Mammary epithelial cell (primary cell): ENCODE measurements at regions of chr10 and their contacts with region 1.

Region 1: GRCh38 chr10:86399879-86400704 is 33.5 kb upstream of the GRID1 start:
- DNase-seq: peak; percentile 95
- H3K4me3 ChIP-seq: peak overlapping the region; percentile 68 to 83 (median 79)
- H3K27ac ChIP-seq: peak overlapping the region; percentile 27
- H3K4me1 ChIP-seq: peaks cover 31% of the 10 kb centered on the region
- H3K27me3 ChIP-seq: no peaks in the 10 kb centered on the region
- CTCF ChIP-seq: peak; percentile 79 to 94

Region 2: GRCh38 chr10:86440874-86441843 is 41.1 kb after region 1 on chr10:
- CTCF ChIA-PET with region 1: no interaction called
- dilution Hi-C with region 1: no loop called
- in situ Hi-C with region 1: no loop called
- intact Hi-C with region 1: loop called (anchors 5 kb)
- DNase-seq: peak; percentile 70
- H3K4me3 ChIP-seq: no peak overlapping the region
- H3K27ac ChIP-seq: no peak overlapping the region
- H3K4me1 ChIP-seq: no peaks in the 10 kb centered on the region
- H3K27me3 ChIP-seq: no peaks in the 10 kb centered on the region
- CTCF ChIP-seq: no peak

Region 3: DNA sequence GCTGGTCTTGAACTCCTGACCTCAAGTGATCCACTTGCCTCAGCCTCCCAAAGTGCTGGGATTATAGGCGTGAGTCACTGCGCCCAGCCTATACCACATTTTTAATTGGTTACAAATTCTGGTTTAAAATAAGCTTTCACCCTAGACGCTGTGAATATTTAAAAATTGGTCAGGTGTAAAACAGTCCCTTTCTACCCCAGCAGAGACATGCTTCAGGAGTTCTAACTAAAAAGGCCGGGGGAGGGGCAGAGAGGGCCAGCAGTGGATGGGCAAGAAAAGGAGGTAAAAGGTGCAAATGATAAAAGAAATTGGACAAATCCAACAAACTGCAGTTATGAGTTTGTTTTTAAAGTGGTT is 51.5 kb after region 1 on chr10:
- CTCF ChIA-PET with region 1: no interaction called
- dilution Hi-C with region 1: no loop called
- in situ Hi-C with region 1: no loop called
- intact Hi-C with region 1: no loop called
- DNase-seq: no peak
- H3K4me3 ChIP-seq: no peak overlapping the region
- H3K27ac ChIP-seq: no peak overlapping the region
- H3K4me1 ChIP-seq: no peaks in the 10 kb centered on the region
- H3K27me3 ChIP-seq: no peaks in the 10 kb centered on the region
- CTCF ChIP-seq: no peak

Region 4: DNA sequence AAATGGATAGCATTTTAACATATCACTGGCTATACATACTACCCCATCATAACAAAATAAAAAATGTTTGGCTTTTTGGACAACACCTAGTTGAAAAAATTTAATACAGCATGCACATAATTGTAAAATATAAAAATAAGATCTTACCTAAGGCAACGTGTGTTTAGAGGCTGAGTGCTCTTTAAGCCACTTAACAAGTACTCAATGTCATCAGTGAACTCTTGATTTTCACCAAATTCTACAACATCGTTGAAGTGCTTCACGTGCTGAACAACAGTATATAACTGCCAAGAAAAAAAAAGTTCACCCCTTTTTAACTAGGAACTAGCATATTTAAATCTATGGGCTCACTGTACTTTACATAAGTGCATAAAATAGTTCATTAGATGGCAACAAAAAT is 72.0 kb after region 1 on chr10:
- CTCF ChIA-PET with region 1: no interaction called
- dilution Hi-C with region 1: no loop called
- in situ Hi-C with region 1: no loop called
- intact Hi-C with region 1: no loop called
- DNase-seq: no peak
- H3K4me3 ChIP-seq: no peak overlapping the region
- H3K27ac ChIP-seq: no peak overlapping the region
- H3K4me1 ChIP-seq: no peaks in the 10 kb centered on the region
- H3K27me3 ChIP-seq: no peaks in the 10 kb centered on the region
- CTCF ChIP-seq: no peak

Region 5: DNA sequence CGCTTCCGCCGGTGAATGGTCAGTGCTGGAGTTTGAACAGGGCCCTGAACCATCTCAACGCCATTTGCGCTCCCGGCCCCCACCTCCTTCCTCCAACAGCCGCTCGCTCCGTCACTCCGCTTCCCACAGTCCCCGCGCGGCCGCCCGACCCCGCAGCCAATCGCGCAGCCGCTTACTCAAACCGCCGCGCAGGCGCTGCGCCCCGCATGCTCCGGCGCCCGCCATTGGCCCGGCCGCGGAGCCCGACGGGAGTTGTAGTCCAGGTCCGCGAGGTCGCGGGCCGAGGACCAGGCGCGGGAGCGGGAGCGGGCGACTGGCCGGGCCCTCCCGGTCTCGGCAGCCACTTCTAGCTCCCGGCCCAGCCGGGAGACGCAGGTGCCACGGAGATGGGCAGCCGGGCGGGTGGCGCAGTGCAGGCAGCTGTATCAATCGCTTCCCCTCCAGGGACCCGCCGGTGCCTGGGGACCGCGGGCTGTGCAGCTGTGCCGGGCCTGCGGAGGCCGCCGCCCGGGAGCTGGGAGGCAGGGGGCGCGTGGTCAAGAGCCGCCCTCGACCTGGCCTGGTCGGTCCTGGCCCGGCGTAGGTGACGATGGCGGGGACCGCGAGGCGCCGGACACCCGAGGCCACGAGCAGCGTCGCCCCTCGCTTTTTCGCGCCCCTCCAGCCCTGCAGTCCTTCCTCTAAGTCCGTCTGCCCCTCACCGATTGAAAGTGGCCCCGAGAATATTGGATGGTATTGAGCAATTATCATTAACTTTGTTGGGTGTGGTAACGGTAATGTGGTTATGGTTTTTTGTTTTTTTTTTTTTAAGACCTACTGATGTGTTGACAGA is 121.8 kb after region 1 on chr10 and contains the start of gene WAPL:
- CTCF ChIA-PET with region 1: no interaction called
- dilution Hi-C with region 1: no loop called
- in situ Hi-C with region 1: no loop called
- intact Hi-C with region 1: loop called (anchors 1 kb)
- DNase-seq: peak; percentile 92
- H3K4me3 ChIP-seq: peak within 1 kb of the TSS; percentile 84 to 96 (median 96)
- H3K27ac ChIP-seq: peak within 1 kb of the TSS; percentile 77
- H3K4me1 ChIP-seq: peaks cover 10% of the 10 kb centered on the region
- H3K27me3 ChIP-seq: no peaks in the 10 kb centered on the region
- CTCF ChIP-seq: no peak
- total RNA-seq, gene WAPL: 37.5 to 37.8 TPM

Region 6: GRCh38 chr10:86585037-86585725 is 185.1 kb after region 1 on chr10:
- CTCF ChIA-PET with region 1: interaction called, 13 read pairs
- dilution Hi-C with region 1: no loop called
- in situ Hi-C with region 1: loop called (anchors 10 kb)
- intact Hi-C with region 1: loop called (anchors 1 kb)
- DNase-seq: peak; percentile 44
- H3K4me3 ChIP-seq: no peak overlapping the region
- H3K27ac ChIP-seq: no peak overlapping the region
- H3K4me1 ChIP-seq: no peaks in the 10 kb centered on the region
- H3K27me3 ChIP-seq: no peaks in the 10 kb centered on the region
- CTCF ChIP-seq: peak; percentile 85 to 96

Region 7: GRCh38 chr10:86960003-86960862 is 560.1 kb after region 1 on chr10:
- CTCF ChIA-PET with region 1: interaction called, 5 read pairs
- dilution Hi-C with region 1: no loop called
- in situ Hi-C with region 1: no loop called
- intact Hi-C with region 1: loop called (anchors 2 kb)
- DNase-seq: peak; percentile 49
- H3K4me3 ChIP-seq: no peak overlapping the region
- H3K27ac ChIP-seq: peak overlapping the region; percentile 71
- H3K4me1 ChIP-seq: peaks cover 51% of the 10 kb centered on the region
- H3K27me3 ChIP-seq: no peaks in the 10 kb centered on the region
- CTCF ChIP-seq: peak; percentile 99 to 100